Transverse colon (tissue), 4 donors: ENCODE measurements at regions of chr3 and their contacts with region 1.

Region 1: DNA sequence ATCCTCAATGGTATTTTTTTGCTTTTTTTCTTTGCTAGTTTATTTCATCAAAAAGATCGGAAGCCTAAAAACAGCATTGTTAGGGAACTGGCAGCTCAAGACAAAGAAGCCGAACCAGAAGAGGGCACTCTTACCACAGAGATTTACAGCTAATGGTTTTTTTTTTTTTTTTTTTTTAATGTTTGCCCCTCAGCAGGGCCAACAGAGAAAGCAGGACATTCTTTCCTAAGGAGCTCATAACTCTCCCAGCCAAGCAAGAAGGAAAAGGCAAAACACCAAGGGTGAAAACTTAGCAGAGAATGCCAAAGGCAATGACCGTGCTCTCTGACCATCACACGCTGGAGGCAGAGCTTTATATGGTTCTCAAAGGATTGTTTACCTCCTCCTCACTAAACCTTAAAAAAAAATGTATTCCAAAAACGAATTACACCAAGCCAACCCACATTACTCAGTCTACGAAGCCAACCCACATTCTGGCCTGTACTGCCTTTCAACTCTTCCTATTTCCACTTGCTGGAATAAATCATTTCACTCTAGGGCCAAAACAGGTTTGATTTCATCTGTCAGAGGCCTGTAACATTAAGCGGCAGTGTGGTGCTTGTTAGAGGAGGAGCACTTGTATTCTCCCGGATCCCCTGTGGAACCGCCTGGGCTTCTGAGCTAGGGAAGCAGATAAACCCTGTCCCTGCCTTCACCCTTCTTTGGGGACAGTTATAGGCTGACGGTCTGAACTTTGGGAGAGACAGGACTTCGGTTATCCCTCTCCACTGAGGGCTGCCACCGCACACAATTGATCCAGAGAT is 35.6 kb upstream of the GYG1 start:
- DNase-seq: peak; percentile 35
- H3K4me3 ChIP-seq: no peak overlapping the region
- H3K27ac ChIP-seq: peak overlapping the region; percentile 67 to 91 (median 83)
- H3K4me1 ChIP-seq: peaks cover 0 to 20% (median 4%) of the 10 kb centered on the region in 4 donors
- H3K27me3 ChIP-seq: no peaks in the 10 kb centered on the region
- CTCF ChIP-seq: peak; percentile 41 to 58 (median 53)
- EP300 ChIP-seq: no peak
- POLR2A ChIP-seq: no peak

Region 2: GRCh38 chr3:149120051-149120972 is 164.6 kb after region 1 on chr3:
- in situ Hi-C with region 1: loop called in 1 of 4 experiments (anchors 25 kb)
- intact Hi-C with region 1: no loop called
- DNase-seq: no peak
- H3K4me3 ChIP-seq: no peak overlapping the region
- H3K27ac ChIP-seq: no peak overlapping the region
- H3K4me1 ChIP-seq: peaks cover 0 to 3% (median 0%) of the 10 kb centered on the region in 4 donors
- H3K27me3 ChIP-seq: no peaks in the 10 kb centered on the region
- CTCF ChIP-seq: peak; percentile 49 to 64 (median 57)
- EP300 ChIP-seq: no peak
- POLR2A ChIP-seq: no peak

Region 3: GRCh38 chr3:149267565-149267964 is 311.8 kb after region 1 on chr3:
- in situ Hi-C with region 1: loop called in 3 of 4 experiments (anchors 5 to 10 kb)
- intact Hi-C with region 1: loop called (anchors 5 kb)
- DNase-seq: no peak
- H3K4me3 ChIP-seq: no peak overlapping the region
- H3K27ac ChIP-seq: no peak overlapping the region
- H3K4me1 ChIP-seq: no peaks in the 10 kb centered on the region
- H3K27me3 ChIP-seq: no peaks in the 10 kb centered on the region
- CTCF ChIP-seq: no peak
- EP300 ChIP-seq: no peak
- POLR2A ChIP-seq: no peak